ENCODE measurements at regions of chr18 and their contacts with region 1.

Region 1: GRCh38 chr18:3281456-3282400 is 19.8 kb downstream of the MYL12B start:
- DNase-seq: no peak
- H3K4me3 Mint-ChIP-seq: no peak overlapping the region
- H3K27ac Mint-ChIP-seq: no peak overlapping the region
- H3K4me1 Mint-ChIP-seq: peaks cover 6% of the 10 kb centered on the region
- H3K27me3 Mint-ChIP-seq: no peaks in the 10 kb centered on the region

Region 2: DNA sequence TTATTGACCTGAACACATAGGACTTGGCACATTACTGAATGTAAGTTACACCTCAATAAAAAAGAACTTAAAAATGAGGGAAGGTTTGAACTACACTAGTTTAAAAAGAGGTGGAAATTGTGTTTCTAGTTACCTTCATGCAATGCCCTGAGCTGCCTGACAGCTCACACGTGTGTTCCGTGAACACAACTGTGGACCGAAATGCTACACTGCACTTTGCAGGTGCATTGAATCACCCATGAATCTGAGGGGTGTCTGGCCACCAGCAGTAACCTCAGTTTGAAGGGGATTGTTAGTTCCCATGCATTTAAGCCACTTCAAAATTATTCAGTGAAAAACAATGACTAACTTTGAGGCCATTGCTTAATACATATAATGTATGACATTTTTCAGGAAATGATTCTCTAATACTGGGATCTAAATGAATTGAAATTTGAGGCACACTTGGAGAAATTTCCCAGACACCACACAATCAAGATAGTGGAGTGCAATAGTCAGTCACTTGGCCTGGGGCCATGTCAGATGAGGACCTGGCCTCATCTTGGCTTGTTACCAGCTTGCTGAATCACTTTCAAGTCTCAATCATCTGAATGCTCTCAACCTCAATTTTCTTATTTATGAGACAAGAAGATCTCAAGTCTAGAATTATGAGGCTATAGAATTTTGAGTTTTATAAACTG is 39.5 kb after region 1 on chr18:
- CTCF ChIA-PET with region 1: interaction called, 4 read pairs
- POLR2A ChIA-PET with region 1: no interaction called
- intact Hi-C with region 1: loop called (anchors 5 kb)
- DNase-seq: peak; percentile 56
- H3K4me3 Mint-ChIP-seq: no peak overlapping the region
- H3K27ac Mint-ChIP-seq: no peak overlapping the region
- H3K4me1 Mint-ChIP-seq: peaks cover 32% of the 10 kb centered on the region
- H3K27me3 Mint-ChIP-seq: peaks cover 7% of the 10 kb centered on the region